Sigmoid colon (tissue), 7 donors: ENCODE measurements at regions of chr12 and their contacts with region 1.

Region 1: DNA sequence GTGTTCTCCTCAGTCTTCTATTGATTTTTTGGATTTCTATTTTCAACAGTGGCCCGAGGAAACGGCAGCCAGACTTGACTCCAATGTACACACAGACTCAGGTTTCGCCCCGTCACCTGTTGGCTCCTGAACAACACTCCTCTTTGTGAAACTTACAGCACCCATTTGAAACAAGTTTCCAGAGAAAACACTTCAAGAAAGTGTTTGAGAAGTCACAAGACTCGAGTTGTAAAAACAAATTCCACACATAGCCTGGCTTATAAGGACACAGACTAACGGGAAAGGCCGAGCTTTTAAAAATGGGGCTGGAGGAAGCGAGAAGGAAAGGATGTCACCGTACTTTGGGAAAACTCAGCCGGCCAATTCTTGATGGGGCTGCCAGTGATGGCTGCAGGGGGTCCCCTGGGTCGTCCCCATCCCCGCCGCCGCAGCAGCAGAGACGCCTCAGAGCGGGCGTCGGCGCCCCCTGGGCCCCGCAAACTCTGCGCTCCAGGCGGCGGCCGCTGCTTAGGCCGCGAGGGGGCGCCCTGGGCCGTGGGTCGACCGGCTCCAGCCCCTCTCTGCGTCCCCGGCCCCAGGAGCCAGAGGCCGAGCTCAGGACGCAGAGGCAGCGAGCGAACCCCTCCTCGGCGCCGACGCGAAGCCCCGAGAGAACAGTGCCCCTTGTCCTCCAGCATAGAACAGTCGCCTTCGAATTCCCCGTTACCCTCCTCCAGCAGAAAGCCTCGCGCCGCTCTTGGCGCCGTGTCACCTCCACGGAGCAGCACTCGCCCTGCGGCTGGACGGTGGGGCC is 106.9 kb downstream of the PRICKLE1 start:
- DNase-seq: peak; percentile 84
- H3K4me3 ChIP-seq: peak overlapping the region; percentile 63 to 80 (median 74)
- H3K27ac ChIP-seq: peak overlapping the region; percentile 84 to 90 (median 88)
- H3K4me1 ChIP-seq: peaks cover 0 to 33% (median 11%) of the 10 kb centered on the region in 4 donors
- H3K27me3 ChIP-seq: no peaks in the 10 kb centered on the region
- CTCF ChIP-seq: peak; percentile 66 to 96 (median 83)
- EP300 ChIP-seq: no peak
- POLR2A ChIP-seq: no peak

Region 2: DNA sequence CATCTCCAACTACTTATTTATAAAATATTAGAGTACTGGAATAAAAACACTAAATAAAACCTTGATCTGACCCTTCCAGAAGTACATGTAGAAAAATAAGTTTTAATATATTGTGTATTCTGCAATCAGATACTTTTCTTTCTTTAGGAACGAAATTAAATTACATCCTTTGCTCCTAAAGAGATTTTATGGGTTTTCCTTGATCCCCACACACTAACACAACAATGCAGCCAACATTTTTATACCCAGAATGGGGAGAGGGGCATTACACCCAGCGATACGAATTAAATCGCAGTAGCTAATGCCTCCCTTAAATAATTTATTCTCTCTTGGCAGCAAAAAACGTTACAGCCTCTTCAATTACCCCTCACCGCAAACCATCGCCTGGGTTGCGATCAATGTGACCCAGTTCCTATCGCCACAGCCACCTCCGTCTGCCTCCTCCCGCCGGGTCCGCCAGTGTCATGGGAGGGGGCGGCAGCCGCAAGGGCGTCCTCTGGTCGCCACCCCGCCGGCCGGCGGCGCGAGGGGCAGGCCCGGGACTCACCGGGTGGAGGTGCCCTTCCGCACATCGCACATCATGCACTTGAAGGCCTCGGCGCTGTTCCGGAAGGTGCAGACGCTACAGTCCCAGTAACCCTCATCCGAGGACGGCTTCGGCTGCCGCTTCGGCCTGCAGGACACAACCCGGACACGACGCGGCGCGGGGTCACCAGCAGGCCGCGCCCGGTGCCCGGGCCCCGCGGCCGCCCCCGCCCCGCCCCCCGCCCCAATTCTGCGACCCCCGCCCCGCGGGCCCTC is 245.4 kb before region 1 on chr12:
- intact Hi-C with region 1: loop called (anchors 10 kb)
- DNase-seq: peak; percentile 87
- H3K4me3 ChIP-seq: peak overlapping the region; percentile 65 to 91 (median 88)
- H3K27ac ChIP-seq: peak overlapping the region; percentile 91 to 98 (median 94)
- H3K4me1 ChIP-seq: peaks cover 0 to 42% (median 26%) of the 10 kb centered on the region in 4 donors
- H3K27me3 ChIP-seq: no peaks in the 10 kb centered on the region
- CTCF ChIP-seq: peak in 3 of 4 experiments; percentile 31 to 54 (median 37)
- EP300 ChIP-seq: no peak
- POLR2A ChIP-seq: no peak

Region 3: GRCh38 chr12:42568952-42569915 is 86.6 kb after region 1 on chr12:
- intact Hi-C with region 1: loop called (anchors 1 kb)
- DNase-seq: no peak
- H3K4me3 ChIP-seq: no peak overlapping the region
- H3K27ac ChIP-seq: no peak overlapping the region
- H3K4me1 ChIP-seq: peaks cover 0 to 9% (median 2%) of the 10 kb centered on the region in 4 donors
- H3K27me3 ChIP-seq: no peaks in the 10 kb centered on the region
- CTCF ChIP-seq: peak in 2 of 4 experiments; percentile 19 to 45
- EP300 ChIP-seq: no peak
- POLR2A ChIP-seq: no peak

Region 4: DNA sequence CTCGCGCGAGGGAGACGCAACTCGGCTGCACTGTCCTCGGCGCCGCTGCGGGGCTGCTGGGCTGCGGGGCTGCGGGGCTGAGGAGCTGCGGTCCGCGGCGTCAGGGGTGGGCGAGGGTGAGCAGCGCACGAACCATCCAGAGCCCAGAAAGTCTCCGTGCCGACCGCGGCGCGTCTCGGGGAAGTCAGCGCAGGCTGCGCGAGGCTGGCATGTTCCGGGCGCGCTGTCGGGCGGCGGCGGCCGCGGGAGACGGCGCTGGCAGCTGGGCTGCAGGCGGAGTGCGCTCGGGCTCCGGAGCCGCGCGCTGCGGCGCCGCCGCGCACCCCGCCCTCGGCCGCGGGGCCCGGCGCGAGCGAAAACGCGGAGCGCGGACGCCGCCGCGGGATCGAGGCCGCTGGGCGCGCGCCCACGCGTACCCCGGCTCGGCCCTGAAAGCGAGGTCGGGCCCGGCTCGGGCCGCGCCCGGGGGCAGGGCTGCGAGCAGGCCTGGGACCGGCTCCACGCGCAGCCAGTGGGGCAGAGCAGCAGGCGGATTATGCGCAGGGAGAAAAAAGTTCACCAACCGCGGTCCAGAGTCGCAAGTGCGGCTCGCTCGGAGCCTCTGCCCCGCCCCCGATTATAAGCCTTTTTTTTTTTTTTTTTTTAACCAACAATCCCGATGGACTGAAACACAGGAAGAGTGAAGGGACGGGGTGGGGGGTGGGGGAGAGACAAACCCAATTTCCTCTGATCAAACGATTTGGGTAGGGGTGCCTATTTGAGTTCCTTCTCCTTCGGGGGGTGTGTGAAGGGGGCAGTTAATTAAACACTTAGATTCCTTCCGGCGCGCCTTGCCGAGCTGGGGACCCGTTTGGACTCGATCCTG is 107.1 kb after region 1 on chr12 and contains the start of gene PRICKLE1:
- intact Hi-C with region 1: loop called (anchors 5 kb)
- DNase-seq: peak; percentile 67
- H3K4me3 ChIP-seq: peak within 1 kb of the TSS; percentile 87 to 94 (median 90)
- H3K27ac ChIP-seq: peak within 1 kb of the TSS; percentile 68 to 84 (median 77)
- H3K4me1 ChIP-seq: peaks cover 0 to 45% (median 41%) of the 10 kb centered on the region in 4 donors
- H3K27me3 ChIP-seq: no peaks in the 10 kb centered on the region
- CTCF ChIP-seq: no peak
- EP300 ChIP-seq: no peak
- POLR2A ChIP-seq: no peak
- total RNA-seq, gene PRICKLE1: 4.6 to 12.4 (median 10.0) TPM

Region 5: GRCh38 chr12:42652048-42652447 is 169.4 kb after region 1 on chr12:
- intact Hi-C with region 1: no loop called
- DNase-seq: no peak
- H3K4me3 ChIP-seq: no peak overlapping the region
- H3K27ac ChIP-seq: no peak overlapping the region
- H3K4me1 ChIP-seq: no peaks in the 10 kb centered on the region
- H3K27me3 ChIP-seq: no peaks in the 10 kb centered on the region
- CTCF ChIP-seq: no peak
- EP300 ChIP-seq: no peak
- POLR2A ChIP-seq: no peak

Region 6: GRCh38 chr12:43282106-43282505 is 799.5 kb after region 1 on chr12:
- intact Hi-C with region 1: loop called (anchors 2 kb)
- DNase-seq: no peak
- H3K4me3 ChIP-seq: no peak overlapping the region
- H3K27ac ChIP-seq: no peak overlapping the region
- H3K4me1 ChIP-seq: no peaks in the 10 kb centered on the region
- H3K27me3 ChIP-seq: no peaks in the 10 kb centered on the region
- CTCF ChIP-seq: peak in 1 of 4 experiments; percentile 17
- EP300 ChIP-seq: no peak
- POLR2A ChIP-seq: no peak

Region 7: DNA sequence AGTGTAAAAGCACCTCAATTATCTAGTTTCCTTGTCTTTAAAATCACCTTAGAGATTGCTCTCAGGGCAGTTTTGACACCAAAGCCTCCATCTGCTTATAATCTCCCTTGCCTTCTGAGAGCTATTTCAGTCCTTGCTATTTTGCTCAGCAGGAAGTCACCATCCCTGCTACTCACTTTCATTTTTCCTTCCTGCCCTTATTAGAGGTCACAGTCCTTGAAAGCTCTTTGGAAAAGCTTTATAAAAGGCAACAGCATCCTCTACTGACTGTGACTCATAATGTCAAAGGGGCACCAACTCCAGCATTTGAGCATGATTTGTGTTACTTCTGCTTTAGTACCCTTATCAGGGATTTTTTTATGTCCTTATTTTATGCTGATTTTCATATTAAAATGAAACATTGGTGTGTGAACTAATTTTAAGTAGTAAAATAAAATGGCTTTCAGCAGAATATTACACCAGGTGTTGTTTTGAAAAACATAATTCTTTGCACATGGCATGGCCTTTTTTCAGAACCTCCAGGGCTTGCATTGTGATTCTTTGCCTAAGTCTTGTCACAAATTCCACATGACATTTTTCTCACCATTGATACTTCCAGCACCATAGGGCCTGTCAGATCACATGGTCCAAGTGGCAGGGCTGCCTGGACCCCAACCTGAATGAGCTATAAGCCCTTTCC is 856.3 kb after region 1 on chr12:
- intact Hi-C with region 1: loop called (anchors 1 kb)
- DNase-seq: no peak
- H3K4me3 ChIP-seq: no peak overlapping the region
- H3K27ac ChIP-seq: peak overlapping the region in 3 of 4 donors; percentile 49 to 71 (median 50)
- H3K4me1 ChIP-seq: peaks cover 0 to 14% (median 6%) of the 10 kb centered on the region in 4 donors
- H3K27me3 ChIP-seq: no peaks in the 10 kb centered on the region
- CTCF ChIP-seq: peak in 2 of 4 experiments; percentile 48 to 49
- EP300 ChIP-seq: no peak
- POLR2A ChIP-seq: no peak